Transverse colon (tissue), 4 donors: ENCODE measurements at regions of chr17 and their contacts with region 1.

Region 1: DNA sequence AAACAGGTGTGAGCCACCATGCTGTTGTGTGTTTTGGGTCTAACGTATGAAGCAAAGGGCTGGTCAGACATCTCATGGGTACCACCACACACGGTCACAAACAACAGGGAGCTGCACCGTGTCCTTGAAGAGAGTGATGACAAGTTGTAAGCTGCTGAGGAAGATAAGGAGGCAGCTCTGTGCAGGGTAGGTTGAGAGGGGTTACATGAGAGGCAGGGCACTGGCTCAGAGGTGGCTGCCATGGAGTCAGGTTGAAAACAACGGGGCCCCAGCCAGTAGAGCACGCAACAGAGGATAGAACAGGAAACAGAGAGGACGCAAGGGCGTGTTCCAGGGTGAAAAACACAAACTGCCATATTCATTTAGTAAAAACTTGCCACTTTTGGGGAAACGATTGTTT is 52.2 kb downstream of the TRARG1 start:
- DNase-seq: no peak
- H3K4me3 ChIP-seq: no peak overlapping the region
- H3K27ac ChIP-seq: no peak overlapping the region
- H3K4me1 ChIP-seq: no peaks in the 10 kb centered on the region
- H3K27me3 ChIP-seq: no peaks in the 10 kb centered on the region
- CTCF ChIP-seq: no peak
- EP300 ChIP-seq: no peak
- POLR2A ChIP-seq: no peak

Region 2: GRCh38 chr17:1197781-1198490 is 133.8 kb before region 1 on chr17:
- in situ Hi-C with region 1: no loop called
- intact Hi-C with region 1: no loop called
- DNase-seq: peak; percentile 82
- H3K4me3 ChIP-seq: no peak overlapping the region
- H3K27ac ChIP-seq: peak overlapping the region; percentile 70 to 83 (median 76)
- H3K4me1 ChIP-seq: peaks cover 5 to 47% (median 17%) of the 10 kb centered on the region in 4 donors
- H3K27me3 ChIP-seq: no peaks in the 10 kb centered on the region
- CTCF ChIP-seq: no peak
- EP300 ChIP-seq: no peak
- POLR2A ChIP-seq: no peak

Region 3: DNA sequence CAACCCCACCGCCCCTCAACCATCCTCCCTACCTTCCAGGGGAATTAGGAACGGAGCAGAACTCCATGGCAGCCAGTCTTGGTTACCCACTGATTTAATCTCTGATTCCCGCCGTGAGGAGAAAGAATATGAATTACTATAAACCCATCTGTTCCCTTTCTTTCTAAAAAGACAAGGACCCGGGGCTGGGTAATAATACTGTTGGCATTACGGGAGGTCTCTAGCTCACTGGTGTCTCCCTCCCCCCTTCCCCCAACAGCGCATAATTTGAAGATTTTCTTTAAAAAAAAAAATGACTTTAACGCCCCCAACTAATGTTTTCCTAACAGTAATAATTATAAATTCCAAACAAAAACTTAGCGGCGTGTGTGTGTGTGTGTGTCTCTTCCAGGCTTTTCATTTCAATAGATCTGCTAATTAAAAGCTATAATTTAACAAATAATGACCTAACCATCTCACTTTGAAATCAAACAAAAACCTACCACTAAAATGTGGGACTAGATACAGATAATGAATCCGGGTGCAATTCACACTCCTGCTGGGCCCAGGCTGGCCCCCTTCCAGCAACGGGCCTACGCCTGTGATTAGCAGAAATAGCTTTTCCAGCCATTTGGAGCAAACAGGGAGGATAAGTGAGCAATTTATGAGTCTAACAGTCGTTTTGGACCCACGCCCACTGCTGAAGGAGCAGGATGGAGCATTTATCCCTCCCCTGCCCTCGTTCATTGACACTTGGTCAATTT is 79.7 kb before region 1 on chr17:
- in situ Hi-C with region 1: loop called in 2 of 4 experiments (anchors 5 to 10 kb)
- intact Hi-C with region 1: no loop called
- DNase-seq: no peak
- H3K4me3 ChIP-seq: no peak overlapping the region
- H3K27ac ChIP-seq: peak overlapping the region in 2 of 4 donors; percentile 36 to 44
- H3K4me1 ChIP-seq: peaks cover 0 to 17% (median 5%) of the 10 kb centered on the region in 4 donors
- H3K27me3 ChIP-seq: no peaks in the 10 kb centered on the region
- CTCF ChIP-seq: no peak
- EP300 ChIP-seq: no peak
- POLR2A ChIP-seq: no peak

Region 4: DNA sequence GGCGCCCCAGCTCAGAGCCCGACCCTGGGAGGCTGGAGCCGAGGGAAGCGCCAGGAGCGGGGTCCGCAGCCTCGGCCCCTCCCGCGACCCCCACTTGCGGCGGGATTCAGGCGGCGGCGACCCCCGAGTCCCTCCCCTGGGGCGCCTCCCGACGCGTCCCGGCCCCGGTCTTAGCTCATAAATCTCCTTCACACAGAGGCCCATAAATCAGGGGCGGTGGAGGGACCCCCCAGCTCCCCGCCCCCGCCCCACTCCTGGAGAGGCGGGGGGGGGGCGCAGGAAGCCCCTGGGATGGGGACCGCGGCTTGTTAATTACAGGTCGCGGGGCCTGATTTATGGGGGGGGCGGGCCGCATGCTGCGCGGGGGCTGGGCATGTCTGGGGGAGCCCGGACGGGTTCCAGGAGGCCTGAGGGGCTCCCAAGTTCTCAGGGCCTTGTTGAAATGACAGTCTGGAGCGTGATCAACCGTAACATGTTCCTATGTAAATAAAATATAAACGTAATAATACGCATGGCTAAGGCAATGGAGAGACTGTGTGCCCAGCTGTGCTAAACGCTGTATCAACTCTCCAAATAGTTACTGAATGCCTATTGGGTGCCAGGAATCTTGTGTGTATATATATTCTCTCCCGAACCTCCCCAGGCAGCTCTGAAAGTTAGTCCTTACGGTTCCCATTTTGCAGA is 71.5 kb before region 1 on chr17:
- in situ Hi-C with region 1: loop called in 2 of 4 experiments (anchors 5 to 10 kb)
- intact Hi-C with region 1: loop called (anchors 1 kb)
- DNase-seq: no peak
- H3K4me3 ChIP-seq: peak overlapping the region; percentile 31 to 54 (median 38)
- H3K27ac ChIP-seq: peak overlapping the region; percentile 58 to 79 (median 70)
- H3K4me1 ChIP-seq: peaks cover 0 to 13% (median 9%) of the 10 kb centered on the region in 4 donors
- H3K27me3 ChIP-seq: peaks cover 7% of the 10 kb centered on the region
- CTCF ChIP-seq: no peak
- EP300 ChIP-seq: no peak
- POLR2A ChIP-seq: no peak

Region 5: DNA sequence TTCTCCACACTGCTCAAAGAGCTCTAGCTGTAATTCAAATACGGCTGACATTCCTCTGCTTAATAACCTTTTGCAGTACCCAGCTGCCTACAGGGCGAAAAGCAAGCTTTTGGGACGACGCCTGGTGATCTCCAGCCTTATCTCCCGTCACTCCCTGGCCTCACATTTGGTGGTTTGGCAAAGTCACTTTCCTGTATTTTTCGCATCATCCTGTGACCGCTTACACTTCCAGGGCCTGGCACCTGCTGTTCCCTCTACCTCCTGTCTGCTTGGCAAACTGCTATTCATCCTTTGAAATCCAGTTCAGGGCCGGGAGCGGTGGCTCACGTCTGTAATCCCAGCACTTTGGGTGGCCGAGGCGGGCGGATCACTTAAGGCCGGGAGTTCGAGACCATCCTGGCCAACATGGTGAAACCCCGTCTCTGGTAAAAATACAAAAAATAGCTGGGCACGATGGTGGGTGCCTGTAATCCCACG is 64.2 kb before region 1 on chr17:
- in situ Hi-C with region 1: loop called in 1 of 4 experiments (anchors 10 kb)
- intact Hi-C with region 1: loop called (anchors 5 kb)
- DNase-seq: no peak
- H3K4me3 ChIP-seq: peak overlapping the region; percentile 58 to 85 (median 74)
- H3K27ac ChIP-seq: peak overlapping the region; percentile 89 to 93 (median 92)
- H3K4me1 ChIP-seq: peaks cover 0 to 19% (median 15%) of the 10 kb centered on the region in 4 donors
- H3K27me3 ChIP-seq: peaks cover 36% of the 10 kb centered on the region
- CTCF ChIP-seq: no peak
- EP300 ChIP-seq: no peak
- POLR2A ChIP-seq: no peak

Region 6: DNA sequence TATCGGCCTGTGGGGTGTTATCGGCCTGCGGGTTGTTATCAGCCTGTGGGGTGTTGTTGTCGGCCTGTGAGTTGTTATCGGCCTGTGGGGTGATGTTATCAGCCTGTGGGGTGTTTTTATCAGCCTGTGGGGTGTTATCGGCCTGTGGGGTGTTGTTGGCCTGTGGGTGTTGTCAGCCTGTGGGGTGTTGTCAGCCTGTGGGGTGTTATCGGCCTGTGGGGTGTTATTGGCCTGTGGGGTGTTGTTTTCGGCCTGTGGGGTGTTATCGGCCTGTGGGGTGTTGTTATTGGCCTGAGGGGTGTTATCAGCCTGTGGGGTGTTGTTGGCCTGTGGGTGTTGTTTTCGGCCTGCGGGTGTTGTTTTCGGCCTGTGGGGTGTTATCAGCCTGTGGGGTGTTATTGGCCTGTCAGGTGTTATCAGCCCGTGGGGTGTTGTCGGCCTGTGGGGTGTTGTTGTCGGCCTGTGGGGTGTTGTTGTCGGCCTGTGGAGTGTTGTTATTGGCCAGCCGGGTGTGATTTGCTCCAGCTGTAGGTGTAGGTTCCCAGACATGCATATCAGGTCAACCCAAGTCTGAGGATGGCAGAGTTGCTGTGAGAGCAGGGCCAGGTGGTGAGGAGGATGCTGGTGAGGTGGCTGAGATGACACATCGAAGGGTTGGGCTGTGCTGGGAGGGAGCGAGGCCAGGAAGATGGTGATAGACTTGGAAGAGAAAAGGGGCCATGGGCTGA is 45.2 kb before region 1 on chr17:
- in situ Hi-C with region 1: no loop called
- intact Hi-C with region 1: no loop called
- DNase-seq: no peak
- H3K4me3 ChIP-seq: no peak overlapping the region
- H3K27ac ChIP-seq: no peak overlapping the region
- H3K4me1 ChIP-seq: no peaks in the 10 kb centered on the region
- H3K27me3 ChIP-seq: no peaks in the 10 kb centered on the region
- CTCF ChIP-seq: no peak
- EP300 ChIP-seq: no peak
- POLR2A ChIP-seq: no peak

Region 7: GRCh38 chr17:1447052-1447451 is 115.3 kb after region 1 on chr17:
- in situ Hi-C with region 1: no loop called
- intact Hi-C with region 1: no loop called
- DNase-seq: no peak
- H3K4me3 ChIP-seq: no peak overlapping the region
- H3K27ac ChIP-seq: peak overlapping the region in 3 of 4 donors; percentile 7 to 24 (median 9)
- H3K4me1 ChIP-seq: peaks cover 0 to 45% (median 25%) of the 10 kb centered on the region in 4 donors
- H3K27me3 ChIP-seq: no peaks in the 10 kb centered on the region
- CTCF ChIP-seq: no peak
- EP300 ChIP-seq: no peak
- POLR2A ChIP-seq: no peak

Region 8: DNA sequence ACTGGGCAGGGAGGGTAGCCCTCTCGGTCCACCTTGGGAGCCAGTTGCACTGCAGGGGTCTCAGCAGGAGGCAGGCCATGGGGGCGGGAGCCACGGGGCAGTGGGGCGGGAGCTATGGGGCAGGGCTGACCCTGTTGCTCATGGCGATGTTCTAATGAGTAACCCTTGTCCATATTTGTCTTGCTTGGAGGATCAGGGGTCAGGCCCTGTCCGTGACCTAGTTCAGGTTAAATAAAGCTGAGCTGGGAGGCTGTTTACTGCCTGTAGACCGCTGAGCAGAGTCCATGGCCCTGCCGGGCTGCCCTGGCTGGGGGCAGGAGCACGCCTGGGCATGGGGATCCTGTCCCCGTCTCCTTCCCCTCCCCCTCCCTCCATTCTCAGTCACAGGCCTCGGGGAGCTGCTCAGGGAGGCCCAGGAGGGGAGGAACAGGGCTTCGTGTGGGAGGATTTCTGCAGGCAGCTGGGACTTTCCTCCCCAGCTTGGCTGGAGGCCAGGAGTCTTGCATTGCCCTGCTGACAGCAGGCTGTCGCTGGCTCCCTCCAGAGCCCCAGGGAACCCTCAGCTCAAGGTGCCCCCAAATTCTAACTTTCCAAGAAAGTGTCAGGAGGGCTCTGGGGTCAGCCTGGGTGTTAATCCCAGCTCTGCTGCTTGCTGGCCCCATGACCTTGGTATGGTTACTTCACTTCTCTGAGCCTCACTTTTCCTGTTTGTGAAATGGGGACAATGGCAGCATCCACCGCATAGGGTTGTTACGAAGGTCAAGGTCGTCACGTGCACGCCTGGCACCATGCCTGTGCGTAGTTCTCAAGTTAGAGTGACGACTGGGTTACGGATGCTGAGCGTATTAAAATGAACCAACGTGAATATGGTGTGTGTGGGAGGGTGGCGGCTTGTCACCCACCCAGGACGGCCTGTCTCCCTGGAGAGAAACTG is 404.9 kb after region 1 on chr17:
- in situ Hi-C with region 1: no loop called
- intact Hi-C with region 1: no loop called
- DNase-seq: peak; percentile 52
- H3K4me3 ChIP-seq: no peak overlapping the region
- H3K27ac ChIP-seq: peak overlapping the region; percentile 4 to 39 (median 30)
- H3K4me1 ChIP-seq: peaks cover 0 to 21% (median 5%) of the 10 kb centered on the region in 4 donors
- H3K27me3 ChIP-seq: no peaks in the 10 kb centered on the region
- CTCF ChIP-seq: no peak
- EP300 ChIP-seq: no peak
- POLR2A ChIP-seq: no peak